PC-9 (cell line): ENCODE measurements at regions of chr4 and their contacts with region 1.

Region 1: DNA sequence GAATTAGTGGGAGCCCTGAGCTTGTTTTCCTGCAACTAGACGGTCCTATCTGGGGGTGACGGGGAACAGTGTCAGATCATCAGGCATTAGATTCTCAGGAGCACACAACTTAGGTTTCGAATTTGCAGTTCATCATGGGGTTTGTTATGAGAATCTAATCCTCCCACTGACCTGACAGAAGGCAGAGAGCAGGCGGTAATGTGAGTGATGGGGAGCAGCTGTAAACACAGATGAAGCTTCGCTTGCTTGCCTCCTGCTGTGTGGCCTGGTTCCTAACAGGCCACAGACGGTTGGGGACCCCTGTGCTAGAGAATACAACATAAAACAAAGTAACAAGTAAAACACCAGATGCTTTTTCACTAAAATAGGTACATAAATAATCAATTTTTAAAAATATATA is 86.2 kb upstream of the BLTP1 start:
- DNase-seq: no peak
- H3K4me3 ChIP-seq: no peak overlapping the region
- H3K27ac ChIP-seq: no peak overlapping the region
- H3K4me1 ChIP-seq: no peaks in the 10 kb centered on the region
- H3K27me3 ChIP-seq: no peaks in the 10 kb centered on the region
- CTCF ChIP-seq: no peak

Region 2: GRCh38 chr4:122218762-122219161 is 152.8 kb after region 1 on chr4:
- CTCF ChIA-PET with region 1: no interaction called
- POLR2A ChIA-PET with region 1: no interaction called
- intact Hi-C with region 1: no loop called
- DNase-seq: no peak
- H3K4me3 ChIP-seq: no peak overlapping the region
- H3K27ac ChIP-seq: no peak overlapping the region
- H3K4me1 ChIP-seq: no peaks in the 10 kb centered on the region
- H3K27me3 ChIP-seq: no peaks in the 10 kb centered on the region
- CTCF ChIP-seq: peak; percentile 35; the same call in 1 of the 2 replicates

Region 3: DNA sequence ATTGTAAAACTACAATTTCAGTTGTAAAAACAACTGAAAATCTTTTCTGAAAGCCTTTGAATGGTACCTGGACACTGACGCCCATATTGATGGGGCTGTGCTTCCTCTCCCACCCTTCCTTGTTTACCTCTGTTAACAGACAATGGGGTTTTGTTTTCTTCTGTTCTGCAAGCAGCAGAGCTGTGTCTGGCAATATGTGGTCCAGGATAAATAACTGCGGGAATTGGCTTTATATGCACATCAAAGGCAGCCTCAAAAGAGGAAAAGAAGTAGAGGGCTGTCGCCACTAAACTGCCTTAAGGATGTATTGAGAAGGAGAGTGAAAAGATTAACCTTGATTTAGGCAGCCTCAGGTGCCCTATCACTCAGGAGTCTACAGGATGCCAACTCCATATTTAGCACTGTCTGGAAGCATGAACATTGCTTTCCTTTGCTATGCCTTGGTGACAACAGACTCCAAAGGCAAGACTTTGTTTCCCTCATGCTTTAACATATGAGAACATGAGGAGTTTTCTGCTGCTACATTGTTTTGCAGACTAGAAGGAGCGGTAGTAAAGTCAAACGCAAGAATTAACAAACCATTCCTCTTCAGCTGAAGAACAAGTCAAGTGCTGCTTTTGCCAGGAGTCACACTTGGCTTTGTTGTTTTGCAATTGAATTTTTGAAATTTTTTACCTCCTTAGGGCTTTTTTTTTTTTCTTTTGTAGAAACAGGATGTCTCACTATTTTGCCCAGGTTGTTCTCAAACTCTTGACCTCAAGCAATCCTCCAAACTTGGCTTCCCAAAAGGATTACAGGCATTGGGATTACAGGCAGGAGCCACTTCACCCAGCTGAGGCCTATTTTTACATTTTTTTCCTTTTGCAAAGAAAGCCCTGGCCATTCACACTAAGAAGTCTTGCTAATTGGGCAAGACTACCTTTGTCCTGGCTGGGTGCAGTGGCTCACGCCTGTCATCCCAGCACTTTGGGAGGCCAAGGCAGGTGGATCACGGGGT is 552.0 kb after region 1 on chr4:
- CTCF ChIA-PET with region 1: interaction called, 12 read pairs
- POLR2A ChIA-PET with region 1: no interaction called
- intact Hi-C with region 1: no loop called
- DNase-seq: no peak
- H3K4me3 ChIP-seq: no peak overlapping the region
- H3K27ac ChIP-seq: no peak overlapping the region
- H3K4me1 ChIP-seq: no peaks in the 10 kb centered on the region
- H3K27me3 ChIP-seq: no peaks in the 10 kb centered on the region
- CTCF ChIP-seq: no peak